Heart left ventricle (tissue), 16 donors: ENCODE measurements at regions of chr2 and their contacts with region 1.

Region 1: GRCh38 chr2:160493227-160494028 is at the start of gene RBMS1:
- DNase-seq: peak; percentile 74 to 84 (median 80)
- ATAC-seq: peak; percentile 72 to 83 (median 80)
- H3K4me3 ChIP-seq: peak within 1 kb of the TSS; percentile 72 to 98 (median 88)
- H3K27ac ChIP-seq: peak within 1 kb of the TSS; percentile 94 to 98 (median 98)
- H3K4me1 ChIP-seq: peaks cover 0 to 40% (median 14%) of the 10 kb centered on the region in 12 donors
- H3K27me3 ChIP-seq: no peaks in the 10 kb centered on the region
- CTCF ChIP-seq: peak in 1 of 12 donors; percentile 7
- POLR2A ChIP-seq: peak in 1 of 2 donors; percentile 42
- total RNA-seq, gene RBMS1: 44.2 to 102 (median 61.5) TPM

Region 2: DNA sequence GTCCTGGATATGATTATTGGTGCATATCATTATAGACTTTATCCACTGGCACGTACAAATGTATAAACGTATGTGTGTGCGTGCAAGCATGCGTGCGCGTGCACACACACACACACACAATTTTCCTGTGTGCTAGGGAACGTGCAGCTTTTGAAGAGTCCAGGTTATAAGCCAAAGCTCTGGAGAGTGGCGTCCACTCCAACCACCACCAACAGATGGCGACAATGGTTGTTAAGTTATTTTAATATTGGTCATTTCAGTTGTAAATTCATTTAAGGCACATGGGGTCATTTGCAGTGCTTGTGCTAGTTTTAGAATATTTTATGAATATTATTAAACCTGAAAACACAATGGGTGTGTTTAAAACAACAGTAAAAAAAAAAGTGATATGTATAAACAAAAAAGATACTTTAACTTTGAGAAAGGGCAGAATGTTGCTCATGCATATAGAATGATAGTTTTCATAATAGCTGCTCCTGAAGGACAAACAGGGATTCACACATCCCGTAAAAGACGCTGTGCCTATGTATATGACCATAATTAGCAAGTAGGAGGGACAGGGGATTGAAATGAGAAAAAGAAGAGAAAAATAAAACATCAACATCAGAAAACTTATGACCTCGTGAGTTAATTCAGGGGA is 169.1 kb before region 1 on chr2:
- intact Hi-C with region 1: loop called in 5 of 10 experiments (anchors 5 to 10 kb)
- DNase-seq: peak in 4 of 5 donors; percentile 51 to 56 (median 54)
- ATAC-seq: peak in 3 of 4 donors; percentile 33 to 54 (median 43)
- H3K4me3 ChIP-seq: no peak overlapping the region
- H3K27ac ChIP-seq: peak overlapping the region in 2 of 12 donors; percentile 32 to 46
- H3K4me1 ChIP-seq: peaks cover 0 to 96% (median 77%) of the 10 kb centered on the region in 12 donors
- H3K27me3 ChIP-seq: no peaks in the 10 kb centered on the region
- CTCF ChIP-seq: peak; percentile 39 to 87 (median 76)
- POLR2A ChIP-seq: no peak

Region 3: GRCh38 chr2:160406591-160407392 is 86.6 kb before region 1 on chr2:
- intact Hi-C with region 1: loop called in 3 of 10 experiments (anchors 5 kb)
- DNase-seq: peak; percentile 60 to 64 (median 61)
- ATAC-seq: peak; percentile 25 to 58 (median 38)
- H3K4me3 ChIP-seq: peak overlapping the region; percentile 81 to 96 (median 90)
- H3K27ac ChIP-seq: peak overlapping the region; percentile 89 to 99 (median 95)
- H3K4me1 ChIP-seq: peaks cover 8 to 81% (median 70%) of the 10 kb centered on the region in 12 donors
- H3K27me3 ChIP-seq: no peaks in the 10 kb centered on the region
- CTCF ChIP-seq: no peak
- POLR2A ChIP-seq: peak in 1 of 2 donors; percentile 34

Region 4: DNA sequence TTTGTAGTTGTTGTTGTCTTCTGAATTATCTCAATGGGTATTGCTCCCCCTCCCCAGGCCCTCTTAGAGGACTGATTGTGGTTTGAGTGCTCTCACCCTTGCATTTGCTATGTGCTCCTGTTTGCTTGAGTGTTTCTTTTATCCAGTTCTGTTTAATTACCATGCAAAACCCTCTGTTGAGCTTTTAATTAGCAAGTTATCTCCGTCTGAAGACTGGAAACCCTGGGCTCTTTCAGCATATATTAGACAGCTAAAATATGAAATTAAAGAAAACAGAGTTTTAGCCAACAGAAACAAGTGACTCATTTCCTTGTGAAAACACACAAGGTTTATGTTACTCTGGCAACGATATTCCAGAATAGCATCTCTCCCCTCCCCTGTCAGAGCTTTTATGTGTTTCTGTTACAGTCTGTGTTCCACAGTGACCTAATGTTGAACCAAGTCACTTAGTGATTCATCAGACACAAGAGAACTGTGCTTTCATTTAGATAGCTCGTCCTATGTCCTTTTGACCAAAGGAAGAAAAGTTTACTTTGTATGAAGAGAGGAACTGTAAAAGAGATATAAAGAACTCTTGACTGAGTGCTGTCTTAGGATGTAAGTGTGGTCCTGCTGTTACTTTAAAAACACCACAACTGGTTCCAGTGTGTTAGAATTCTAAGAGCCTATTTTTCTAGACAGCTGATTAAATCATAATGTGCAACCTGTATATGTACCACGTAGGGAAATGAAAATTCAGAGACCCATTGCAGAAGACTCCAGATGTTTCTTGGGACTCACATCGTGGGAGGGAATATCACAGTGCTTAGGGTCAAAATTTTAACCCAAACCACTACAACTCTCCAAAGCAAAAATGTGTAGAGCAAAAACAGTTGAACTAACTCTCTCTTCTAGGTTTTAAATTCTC is 173.0 kb after region 1 on chr2:
- intact Hi-C with region 1: loop called in 2 of 10 experiments (anchors 10 kb)
- DNase-seq: peak in 1 of 5 donors; percentile 35
- ATAC-seq: peak; percentile 96 to 99 (median 98)
- H3K4me3 ChIP-seq: peak overlapping the region in 4 of 12 donors; percentile 3 to 18 (median 12)
- H3K27ac ChIP-seq: peak overlapping the region; percentile 11 to 81 (median 60)
- H3K4me1 ChIP-seq: peaks cover 0 to 25% (median 17%) of the 10 kb centered on the region in 12 donors
- H3K27me3 ChIP-seq: no peaks in the 10 kb centered on the region
- CTCF ChIP-seq: no peak
- POLR2A ChIP-seq: no peak

Region 5: GRCh38 chr2:160970052-160970965 is 476.9 kb after region 1 on chr2:
- intact Hi-C with region 1: loop called in 5 of 10 experiments (anchors 1 to 10 kb)
- DNase-seq: peak in 2 of 5 donors; percentile 29 to 30
- ATAC-seq: peak in 3 of 4 donors; percentile 58 to 75 (median 69)
- H3K4me3 ChIP-seq: peak overlapping the region in 9 of 12 donors; percentile 17 to 38 (median 29)
- H3K27ac ChIP-seq: peak overlapping the region in 11 of 12 donors; percentile 22 to 76 (median 63)
- H3K4me1 ChIP-seq: peaks cover 0 to 23% (median 10%) of the 10 kb centered on the region in 12 donors
- H3K27me3 ChIP-seq: no peaks in the 10 kb centered on the region
- CTCF ChIP-seq: peak; percentile 63 to 87 (median 80)
- POLR2A ChIP-seq: no peak